ENCODE measurements at regions of chr15 and their contacts with region 1.

Region 1: DNA sequence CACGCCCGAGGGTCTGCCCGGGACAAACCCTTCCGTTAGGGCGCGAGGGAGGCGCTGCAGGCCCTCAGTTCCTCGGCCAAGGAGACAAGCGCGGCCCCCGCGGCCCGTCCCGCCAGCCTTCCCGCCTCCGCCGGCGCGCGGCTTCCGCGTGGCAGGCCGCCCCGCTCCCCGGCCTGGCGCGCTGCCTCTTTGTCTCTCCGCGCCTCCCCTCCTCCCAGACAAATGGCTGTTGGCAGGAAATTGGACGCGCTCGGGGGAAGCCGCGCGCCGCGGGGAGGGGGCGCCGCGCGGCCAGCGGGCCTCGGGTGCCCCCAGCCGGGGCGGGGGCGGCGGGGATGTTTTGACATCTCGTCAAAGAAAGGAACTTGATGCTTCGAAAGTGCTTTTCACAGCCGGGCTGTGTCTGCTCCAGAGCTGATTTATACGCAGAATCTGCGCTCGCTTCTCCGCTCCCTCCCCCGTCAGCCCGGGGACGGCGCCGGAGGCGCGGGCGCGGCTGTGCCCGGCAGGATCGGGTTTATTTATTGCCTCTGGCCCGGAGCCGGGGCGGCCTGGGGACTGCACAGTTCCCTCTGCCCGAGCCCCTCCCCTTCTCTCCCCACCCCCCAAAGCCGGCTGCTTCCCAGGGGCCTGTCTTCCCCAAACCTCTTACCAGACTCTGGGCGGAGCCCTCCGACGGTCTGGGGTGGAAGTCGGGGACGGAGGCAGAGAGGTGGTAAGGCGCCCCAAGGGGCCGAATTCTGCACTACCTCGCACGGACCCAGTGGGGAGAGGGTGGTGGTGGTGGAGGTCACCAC is 20.7 kb downstream of the SHF start:
- DNase-seq: peak; percentile 91
- ATAC-seq: peak; percentile 93
- H3K4me3 Mint-ChIP-seq: peak overlapping the region; percentile 69
- H3K27ac Mint-ChIP-seq: peak overlapping the region; percentile 77
- H3K4me1 Mint-ChIP-seq: peaks cover 9% of the 10 kb centered on the region
- H3K27me3 Mint-ChIP-seq: no peaks in the 10 kb centered on the region

Region 2: GRCh38 chr15:45179221-45179985 is 12.4 kb after region 1 on chr15:
- CTCF ChIA-PET with region 1: interaction called, 19 read pairs
- POLR2A ChIA-PET with region 1: interaction called, 6 read pairs
- intact Hi-C with region 1: loop called in 1 of 2 experiments (anchors 2 kb)
- DNase-seq: peak; percentile 68
- ATAC-seq: peak; percentile 63
- H3K4me3 Mint-ChIP-seq: no peak overlapping the region
- H3K27ac Mint-ChIP-seq: no peak overlapping the region
- H3K4me1 Mint-ChIP-seq: peaks cover 13% of the 10 kb centered on the region
- H3K27me3 Mint-ChIP-seq: no peaks in the 10 kb centered on the region

Region 3: DNA sequence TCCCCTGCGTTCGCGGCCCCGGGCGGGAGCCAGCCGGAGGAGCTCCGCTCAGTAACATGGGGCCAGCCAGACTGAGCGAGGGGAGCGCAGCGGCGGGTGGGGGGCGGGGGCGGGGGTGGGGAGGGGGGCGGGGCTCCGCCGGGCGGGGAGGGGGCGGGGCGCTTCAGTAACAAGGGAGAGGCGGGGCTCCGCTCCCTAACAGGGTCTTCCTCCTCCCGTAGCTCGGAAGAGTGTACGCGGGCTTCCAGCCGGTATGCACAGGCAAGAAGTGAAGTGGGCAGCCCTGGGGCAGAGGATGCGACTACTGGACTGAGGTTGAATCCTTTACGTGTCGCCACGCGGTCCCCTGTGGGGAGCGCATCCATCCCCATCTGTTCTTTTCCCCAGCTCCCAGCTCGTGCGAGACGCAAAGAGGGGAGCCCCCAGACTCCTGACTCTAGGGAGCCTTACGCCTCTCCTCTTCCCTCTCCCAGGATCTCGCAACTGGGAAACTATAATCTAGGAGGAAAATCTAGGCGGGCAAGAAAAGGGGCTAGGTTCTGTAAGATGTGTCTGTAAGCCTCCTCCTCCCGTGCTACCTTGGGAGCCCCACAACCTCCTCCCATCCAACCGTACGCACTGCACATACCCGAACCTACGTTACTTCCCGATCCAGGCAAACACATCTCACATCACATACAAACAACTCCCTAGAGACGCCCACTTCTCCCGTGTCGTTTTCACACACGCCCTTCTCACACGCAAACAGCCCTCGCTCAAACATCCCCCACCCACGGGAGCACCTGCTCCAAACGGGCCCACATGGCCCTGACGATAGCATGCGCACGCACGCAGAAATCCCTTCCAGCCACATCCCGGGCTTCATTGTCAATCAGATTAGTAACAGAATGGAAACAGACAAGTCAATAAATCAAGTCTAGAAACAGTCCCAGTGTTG is 21.1 kb after region 1 on chr15 and contains the start of gene SHF:
- CTCF ChIA-PET with region 1: interaction called, 19 read pairs
- POLR2A ChIA-PET with region 1: interaction called, 6 read pairs
- intact Hi-C with region 1: loop called (anchors 1 to 2 kb)
- DNase-seq: peak; percentile 90
- ATAC-seq: peak; percentile 82
- H3K4me3 Mint-ChIP-seq: peak within 1 kb of the TSS; percentile 85
- H3K27ac Mint-ChIP-seq: peak within 1 kb of the TSS; percentile 98
- H3K4me1 Mint-ChIP-seq: peaks cover 28% of the 10 kb centered on the region
- H3K27me3 Mint-ChIP-seq: no peaks in the 10 kb centered on the region
- total RNA-seq, gene SHF: 17.9 to 18.7 TPM

Region 4: DNA sequence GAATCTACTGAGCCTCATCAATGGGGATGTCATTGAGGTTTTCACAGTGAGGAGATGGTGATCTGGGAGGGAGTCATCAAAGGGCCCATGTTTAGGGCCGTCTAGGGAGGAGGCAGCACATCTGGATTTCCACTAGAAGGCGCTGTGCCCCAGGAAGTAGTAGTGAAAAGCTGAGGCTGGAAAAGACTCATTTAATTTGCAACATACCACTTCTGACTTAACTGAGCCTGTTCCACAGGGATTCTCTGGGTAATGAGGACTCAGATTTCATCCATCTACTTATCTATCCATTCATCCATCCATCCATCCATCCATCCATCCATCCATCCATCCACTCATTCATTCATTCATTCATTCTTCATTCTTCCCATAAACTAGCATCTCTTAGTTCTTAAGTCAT is 38.2 kb after region 1 on chr15:
- CTCF ChIA-PET with region 1: interaction called, 29 read pairs
- POLR2A ChIA-PET with region 1: interaction called, 3 read pairs
- intact Hi-C with region 1: loop called (anchors 1 kb)
- DNase-seq: peak; percentile 86
- ATAC-seq: peak; percentile 63
- H3K4me3 Mint-ChIP-seq: no peak overlapping the region
- H3K27ac Mint-ChIP-seq: no peak overlapping the region
- H3K4me1 Mint-ChIP-seq: peaks cover 7% of the 10 kb centered on the region
- H3K27me3 Mint-ChIP-seq: peaks cover 2% of the 10 kb centered on the region

Region 5: GRCh38 chr15:45242289-45242688 is 75.3 kb after region 1 on chr15:
- CTCF ChIA-PET with region 1: no interaction called
- POLR2A ChIA-PET with region 1: no interaction called
- intact Hi-C with region 1: no loop called
- DNase-seq: peak; percentile 7
- ATAC-seq: no peak
- H3K4me3 Mint-ChIP-seq: no peak overlapping the region
- H3K27ac Mint-ChIP-seq: no peak overlapping the region
- H3K4me1 Mint-ChIP-seq: no peaks in the 10 kb centered on the region
- H3K27me3 Mint-ChIP-seq: peaks cover 2% of the 10 kb centered on the region

Region 6: DNA sequence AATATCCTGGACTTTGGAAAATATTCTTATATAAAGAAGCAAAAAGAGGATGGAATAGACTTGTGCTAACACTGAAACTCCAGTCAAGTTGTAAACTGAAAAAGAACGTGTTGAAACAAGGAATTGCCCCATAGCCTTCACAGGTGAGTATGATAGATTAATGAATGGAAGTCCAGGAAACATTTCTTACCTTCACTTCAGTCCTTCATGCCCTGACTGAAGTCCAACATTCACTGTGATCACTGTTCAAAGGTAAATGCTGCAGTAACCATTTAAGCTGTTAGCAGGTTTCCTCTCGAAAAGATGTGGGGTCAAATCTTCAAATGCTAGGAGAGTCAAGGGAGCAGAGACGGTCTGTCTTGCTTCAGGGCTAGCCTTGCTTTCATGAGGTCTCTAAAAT is 309.4 kb after region 1 on chr15:
- CTCF ChIA-PET with region 1: no interaction called
- POLR2A ChIA-PET with region 1: no interaction called
- intact Hi-C with region 1: no loop called
- DNase-seq: no peak
- ATAC-seq: no peak
- H3K4me3 Mint-ChIP-seq: no peak overlapping the region
- H3K27ac Mint-ChIP-seq: no peak overlapping the region
- H3K4me1 Mint-ChIP-seq: no peaks in the 10 kb centered on the region
- H3K27me3 Mint-ChIP-seq: peaks cover 2% of the 10 kb centered on the region

Region 7: GRCh38 chr15:45587095-45587860 is 420.2 kb after region 1 on chr15 and contains the start of gene BLOC1S6:
- CTCF ChIA-PET with region 1: no interaction called
- POLR2A ChIA-PET with region 1: no interaction called
- intact Hi-C with region 1: loop called in 1 of 2 experiments (anchors 2 kb)
- DNase-seq: peak; percentile 91
- ATAC-seq: peak; percentile 81
- H3K4me3 Mint-ChIP-seq: peak within 1 kb of the TSS; percentile 94
- H3K27ac Mint-ChIP-seq: peak within 1 kb of the TSS; percentile 100
- H3K4me1 Mint-ChIP-seq: peaks cover 48% of the 10 kb centered on the region
- H3K27me3 Mint-ChIP-seq: no peaks in the 10 kb centered on the region
- total RNA-seq, gene BLOC1S6: 36.1 to 52.5 TPM